B cell (primary cell): ENCODE measurements at regions of chr17 and their contacts with region 1.

Region 1: DNA sequence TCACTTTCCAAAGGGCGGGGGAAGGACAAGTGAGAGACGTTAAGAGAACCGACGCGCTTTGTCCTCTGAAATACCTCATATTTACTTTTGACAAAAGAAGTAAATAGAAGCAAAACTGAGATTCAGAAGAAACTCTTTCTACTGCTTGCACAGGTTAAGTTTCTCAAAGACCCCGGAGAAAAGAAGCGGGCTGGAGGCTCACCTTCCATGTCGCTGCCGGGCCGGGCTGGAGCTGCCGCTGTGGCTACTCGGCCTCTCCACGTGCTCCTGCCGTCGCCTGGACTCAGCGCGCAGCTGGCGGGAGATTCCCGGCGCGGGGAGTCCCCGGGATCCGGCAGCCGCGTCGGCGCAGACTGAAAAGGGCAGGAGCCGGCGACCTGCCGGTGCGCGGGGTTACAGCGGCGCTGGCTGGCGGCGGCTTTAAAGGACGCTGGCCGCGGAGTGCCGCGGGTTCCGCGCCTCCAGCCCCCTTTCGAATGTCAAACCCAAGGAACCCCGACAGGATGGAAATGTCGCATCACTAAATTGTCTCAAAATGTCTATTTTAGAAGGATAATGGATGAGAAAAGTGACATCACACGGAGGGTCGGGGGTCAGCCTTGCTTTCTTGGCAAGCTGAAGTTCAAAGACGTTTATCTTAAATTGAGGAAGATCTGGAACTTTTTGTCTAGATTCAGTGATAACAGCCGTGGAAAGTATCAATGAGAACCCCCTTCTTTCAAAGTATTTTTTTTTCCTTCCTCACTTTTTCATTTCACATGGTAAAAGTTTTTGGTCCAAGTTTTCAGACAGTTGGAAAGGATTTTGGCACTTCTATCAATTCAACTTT is at the start of gene IKZF3:
- DNase-seq: peak; percentile 90
- ATAC-seq: peak; percentile 62
- H3K4me3 ChIP-seq: peak within 1 kb of the TSS; percentile 80 to 99 (median 91)
- H3K4me3 Mint-ChIP-seq: peak within 1 kb of the TSS; percentile 99
- H3K27ac ChIP-seq: peak within 1 kb of the TSS; percentile 94 to 96
- H3K27ac Mint-ChIP-seq: peak within 1 kb of the TSS; percentile 87
- H3K4me1 ChIP-seq: peaks cover 43 to 55% of the 10 kb centered on the region in 2 donors
- H3K4me1 Mint-ChIP-seq: peaks cover 62% of the 10 kb centered on the region
- H3K27me3 ChIP-seq: no peaks in the 10 kb centered on the region
- H3K27me3 Mint-ChIP-seq: no peaks in the 10 kb centered on the region
- CTCF ChIP-seq: peak; percentile 45
- total RNA-seq, gene IKZF3: 178 and 187 TPM in 2 replicates

Region 2: GRCh38 chr17:39614545-39615157 is 249.5 kb before region 1 on chr17:
- CTCF ChIA-PET with region 1: no interaction called
- POLR2A ChIA-PET with region 1: no interaction called
- intact Hi-C with region 1: no loop called
- DNase-seq: no peak
- ATAC-seq: no peak
- H3K4me3 ChIP-seq: no peak overlapping the region
- H3K4me3 Mint-ChIP-seq: no peak overlapping the region
- H3K27ac ChIP-seq: no peak overlapping the region
- H3K27ac Mint-ChIP-seq: peak overlapping the region; percentile 10
- H3K4me1 ChIP-seq: peaks cover 5 to 19% of the 10 kb centered on the region in 2 donors
- H3K4me1 Mint-ChIP-seq: peaks cover 11% of the 10 kb centered on the region
- H3K27me3 ChIP-seq: peaks cover 0 to 24% (median 2%) of the 10 kb centered on the region in 4 experiments
- H3K27me3 Mint-ChIP-seq: peaks cover 23% of the 10 kb centered on the region
- CTCF ChIP-seq: no peak

Region 3: GRCh38 chr17:39668199-39668966 is 195.7 kb before region 1 on chr17 and contains the start of gene PNMT:
- CTCF ChIA-PET with region 1: no interaction called
- POLR2A ChIA-PET with region 1: no interaction called
- intact Hi-C with region 1: loop called (anchors 5 kb)
- DNase-seq: peak; percentile 82
- ATAC-seq: peak; percentile 76
- H3K4me3 ChIP-seq: peak within 1 kb of the TSS in 4 of 5 experiments; percentile 28 to 62 (median 53)
- H3K4me3 Mint-ChIP-seq: peak within 1 kb of the TSS; percentile 75
- H3K27ac ChIP-seq: no peak within 1 kb of the TSS
- H3K27ac Mint-ChIP-seq: peak within 1 kb of the TSS; percentile 7
- H3K4me1 ChIP-seq: peaks cover 24 to 36% of the 10 kb centered on the region in 2 donors
- H3K4me1 Mint-ChIP-seq: peaks cover 27% of the 10 kb centered on the region
- H3K27me3 ChIP-seq: peaks cover 0 to 37% (median 7%) of the 10 kb centered on the region in 4 experiments
- H3K27me3 Mint-ChIP-seq: peaks cover 23% of the 10 kb centered on the region
- CTCF ChIP-seq: peak; percentile 79
- total RNA-seq, gene PNMT: 0.39 and 0.76 TPM in 2 replicates

Region 4: DNA sequence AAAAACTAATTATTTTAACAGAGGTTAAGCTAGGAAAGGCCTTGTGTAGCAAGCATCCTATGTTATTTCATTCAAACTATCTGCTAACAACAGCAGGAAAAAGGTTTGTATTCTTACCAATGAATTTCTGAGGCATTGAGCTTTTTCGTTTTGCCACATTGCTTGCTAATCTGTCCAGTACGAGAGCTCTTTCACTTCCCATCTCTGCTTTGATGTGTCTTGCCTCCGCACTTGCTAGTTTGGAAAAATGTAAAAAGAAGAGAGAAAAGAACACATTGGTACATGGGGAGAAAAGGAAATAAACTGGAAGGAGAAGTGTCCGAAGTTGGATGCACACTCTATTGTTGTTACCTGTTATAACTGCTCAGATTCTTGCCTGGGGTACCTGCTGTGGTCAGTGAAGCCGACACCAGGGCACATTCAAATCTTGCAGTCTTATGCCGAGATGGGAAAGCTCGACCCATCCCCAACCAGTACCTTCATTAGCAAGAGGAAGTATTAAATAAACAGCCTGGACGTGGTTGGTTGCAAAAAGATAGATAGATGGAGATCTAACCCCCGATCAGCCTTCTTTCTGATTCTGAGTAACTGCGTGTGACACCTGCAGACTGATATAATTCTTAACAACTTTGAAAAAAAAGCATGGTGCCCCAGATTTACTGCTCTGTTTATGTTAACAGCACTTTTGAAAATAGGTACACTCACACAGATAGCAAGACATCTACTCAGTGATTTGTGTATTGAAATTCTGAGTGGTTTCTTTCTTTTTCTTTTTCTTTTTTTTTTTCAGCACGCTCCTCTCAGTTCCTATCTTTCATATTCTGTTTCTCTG is 86.4 kb before region 1 on chr17:
- CTCF ChIA-PET with region 1: interaction called, 12 read pairs
- POLR2A ChIA-PET with region 1: interaction called, 3 read pairs
- intact Hi-C with region 1: loop called (anchors 5 kb)
- DNase-seq: peak; percentile 59
- ATAC-seq: peak; percentile 36
- H3K4me3 ChIP-seq: peak overlapping the region; percentile 17 to 86 (median 51)
- H3K4me3 Mint-ChIP-seq: peak overlapping the region; percentile 89
- H3K27ac ChIP-seq: peak overlapping the region; percentile 33 to 86
- H3K27ac Mint-ChIP-seq: peak overlapping the region; percentile 93
- H3K4me1 ChIP-seq: peaks cover 80 to 90% of the 10 kb centered on the region in 2 donors
- H3K4me1 Mint-ChIP-seq: peaks cover 81% of the 10 kb centered on the region
- H3K27me3 ChIP-seq: no peaks in the 10 kb centered on the region
- H3K27me3 Mint-ChIP-seq: no peaks in the 10 kb centered on the region
- CTCF ChIP-seq: no peak

Region 5: DNA sequence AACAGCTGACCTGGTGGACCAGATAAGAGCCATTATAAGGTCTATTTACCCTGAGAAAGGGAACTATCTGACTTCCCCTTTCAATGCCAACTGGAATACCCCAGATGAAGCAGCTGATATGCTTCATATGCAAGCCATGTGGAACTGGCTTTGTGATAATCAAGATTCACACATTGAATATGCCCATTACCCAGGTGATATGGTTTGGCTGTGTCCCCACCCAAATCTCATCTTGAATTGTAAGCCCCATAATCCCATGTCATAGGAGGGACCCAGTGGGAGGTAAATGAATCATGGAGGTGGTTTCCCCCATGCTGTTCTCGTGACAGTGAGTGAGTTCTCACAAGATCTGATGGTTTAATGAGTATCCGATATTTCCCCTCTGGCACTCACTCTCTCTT is 42.1 kb before region 1 on chr17:
- CTCF ChIA-PET with region 1: interaction called, 10 read pairs
- POLR2A ChIA-PET with region 1: interaction called, 3 read pairs
- intact Hi-C with region 1: loop called (anchors 5 kb)
- DNase-seq: peak; percentile 81
- ATAC-seq: peak; percentile 70
- H3K4me3 ChIP-seq: no peak overlapping the region
- H3K4me3 Mint-ChIP-seq: peak overlapping the region; percentile 70
- H3K27ac ChIP-seq: peak overlapping the region; percentile 58 to 85
- H3K27ac Mint-ChIP-seq: peak overlapping the region; percentile 86
- H3K4me1 ChIP-seq: peaks cover 53 to 54% of the 10 kb centered on the region in 2 donors
- H3K4me1 Mint-ChIP-seq: peaks cover 53% of the 10 kb centered on the region
- H3K27me3 ChIP-seq: no peaks in the 10 kb centered on the region
- H3K27me3 Mint-ChIP-seq: no peaks in the 10 kb centered on the region
- CTCF ChIP-seq: no peak